ENCODE measurements at regions of chr2 and their contacts with region 1.

Region 1: DNA sequence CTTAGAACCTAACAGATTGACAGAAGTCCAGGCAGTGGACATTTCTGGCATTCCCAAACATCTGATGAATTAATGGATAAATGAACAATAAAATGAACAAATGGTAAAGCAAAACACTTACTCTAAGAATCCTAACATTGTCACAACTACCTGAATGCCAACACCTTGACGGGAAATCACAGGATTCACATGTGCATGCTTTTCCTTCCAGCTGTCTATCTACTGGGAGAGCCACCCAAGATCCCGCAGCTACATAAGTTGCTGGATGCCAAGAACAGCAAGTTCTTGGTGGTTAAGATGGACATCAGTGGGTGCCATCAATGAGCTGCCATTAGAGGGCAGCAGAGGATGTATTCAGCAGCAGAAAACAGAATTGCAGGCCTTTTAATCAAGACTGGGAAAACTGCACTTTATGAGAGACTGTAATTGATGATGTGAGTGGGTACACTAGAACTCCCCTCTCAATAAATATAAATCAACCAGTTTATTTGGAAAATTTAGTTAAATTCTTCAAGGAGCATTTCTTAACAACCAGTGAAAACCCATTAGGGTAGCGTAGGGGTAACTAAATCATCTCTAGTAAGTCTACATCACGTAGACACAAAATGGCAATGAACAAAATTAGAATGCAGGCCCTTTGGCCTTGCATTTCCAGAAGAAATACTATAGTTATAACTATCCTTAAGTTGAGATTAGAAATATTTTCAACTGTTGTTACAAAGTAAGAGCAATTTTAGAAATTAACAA is 45.6 kb downstream of the SESTD1 start:
- DNase-seq: peak; percentile 82
- ATAC-seq: peak; percentile 64
- H3K4me3 ChIP-seq: no peak overlapping the region
- H3K4me3 Mint-ChIP-seq: no peak overlapping the region
- H3K27ac ChIP-seq: no peak overlapping the region
- H3K27ac Mint-ChIP-seq: no peak overlapping the region
- H3K4me1 ChIP-seq: peaks cover 9 to 19% of the 10 kb centered on the region in 2 donors
- H3K4me1 Mint-ChIP-seq: peaks cover 52% of the 10 kb centered on the region
- H3K27me3 ChIP-seq: no peaks in the 10 kb centered on the region
- H3K27me3 Mint-ChIP-seq: no peaks in the 10 kb centered on the region
- CTCF ChIP-seq: peak; percentile 94

Region 2: DNA sequence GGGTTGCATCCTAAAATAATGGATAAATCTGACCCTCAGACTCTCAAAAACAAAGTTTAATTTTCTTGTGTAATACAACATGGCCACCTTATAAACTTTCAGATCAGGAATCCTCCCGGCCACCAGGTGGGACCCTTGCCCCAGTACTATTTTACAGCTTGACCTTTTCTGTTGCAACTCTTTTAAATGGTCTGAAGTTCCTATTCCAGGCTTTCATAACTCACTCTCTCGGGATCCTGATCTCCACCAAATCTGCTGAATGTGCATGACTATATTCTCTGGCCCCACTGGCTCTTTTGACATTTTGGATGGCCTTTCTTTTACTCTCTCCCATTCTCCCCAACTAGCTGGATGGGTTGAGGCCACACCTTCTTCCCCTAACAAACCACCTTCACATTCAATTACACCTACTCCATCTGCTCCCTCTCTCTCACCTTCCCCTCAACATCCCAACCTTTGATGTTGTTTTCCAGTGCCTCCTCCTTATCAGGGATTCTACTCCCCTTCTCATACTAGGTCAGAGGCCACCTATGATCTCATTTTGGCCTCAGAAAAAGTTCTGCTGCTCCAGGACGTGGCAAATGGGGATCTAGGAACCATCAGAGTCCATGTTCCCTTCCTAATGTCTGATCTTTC is 25.1 kb before region 1 on chr2:
- CTCF ChIA-PET with region 1: interaction called, 4 read pairs
- POLR2A ChIA-PET with region 1: no interaction called
- intact Hi-C with region 1: loop called (anchors 2 kb)
- DNase-seq: peak; percentile 4
- ATAC-seq: no peak
- H3K4me3 ChIP-seq: no peak overlapping the region
- H3K4me3 Mint-ChIP-seq: no peak overlapping the region
- H3K27ac ChIP-seq: no peak overlapping the region
- H3K27ac Mint-ChIP-seq: no peak overlapping the region
- H3K4me1 ChIP-seq: peaks cover 12 to 16% of the 10 kb centered on the region in 2 donors
- H3K4me1 Mint-ChIP-seq: peaks cover 56% of the 10 kb centered on the region
- H3K27me3 ChIP-seq: no peaks in the 10 kb centered on the region
- H3K27me3 Mint-ChIP-seq: no peaks in the 10 kb centered on the region
- CTCF ChIP-seq: no peak

Region 3: DNA sequence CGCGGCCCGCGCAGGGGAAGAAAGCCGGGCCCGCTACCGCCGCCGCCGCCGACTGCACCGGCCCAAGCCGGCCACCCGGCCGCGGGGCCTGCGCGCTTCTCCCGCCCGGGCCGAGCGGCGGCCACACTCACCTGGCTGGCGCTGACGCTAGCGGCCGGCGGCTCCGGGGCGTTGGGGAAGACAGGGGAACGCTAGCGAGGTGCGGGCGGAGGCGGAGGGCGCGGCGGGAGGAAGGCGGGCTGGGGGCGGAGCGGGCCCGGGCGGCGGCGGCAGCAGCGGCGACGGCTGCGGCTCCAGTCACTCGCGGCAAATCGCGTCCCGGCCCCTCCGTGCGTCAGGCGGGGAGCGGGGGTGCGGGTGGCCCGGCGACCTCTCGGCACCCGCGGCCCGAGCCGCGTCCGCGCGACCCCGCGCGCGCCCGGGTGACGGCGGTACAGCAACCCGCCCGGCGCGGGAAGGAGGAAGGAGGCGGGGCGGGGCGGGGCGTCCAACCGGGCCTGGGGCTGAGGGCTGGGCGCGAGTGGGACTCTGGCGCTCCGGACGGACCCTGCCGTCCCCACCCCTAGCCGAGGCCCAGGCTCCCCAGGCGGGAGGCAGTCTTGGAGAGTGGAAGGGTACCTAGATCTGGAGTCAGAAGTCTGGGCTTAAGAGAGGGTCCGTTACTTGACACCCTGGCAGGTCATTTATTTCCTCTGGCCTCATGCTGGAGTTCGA is 45.5 kb after region 1 on chr2 and contains the start of gene SESTD1:
- CTCF ChIA-PET with region 1: interaction called, 4 read pairs
- POLR2A ChIA-PET with region 1: no interaction called
- intact Hi-C with region 1: loop called (anchors 2 kb)
- DNase-seq: peak; percentile 83
- ATAC-seq: peak; percentile 79
- H3K4me3 ChIP-seq: peak within 1 kb of the TSS; percentile 62 to 96 (median 80)
- H3K4me3 Mint-ChIP-seq: peak within 1 kb of the TSS; percentile 92
- H3K27ac ChIP-seq: peak within 1 kb of the TSS; percentile 54 to 87
- H3K27ac Mint-ChIP-seq: peak within 1 kb of the TSS; percentile 91
- H3K4me1 ChIP-seq: peaks cover 24 to 45% of the 10 kb centered on the region in 2 donors
- H3K4me1 Mint-ChIP-seq: peaks cover 51% of the 10 kb centered on the region
- H3K27me3 ChIP-seq: no peaks in the 10 kb centered on the region
- H3K27me3 Mint-ChIP-seq: no peaks in the 10 kb centered on the region
- CTCF ChIP-seq: no peak
- total RNA-seq, gene SESTD1: 66.1 and 71.9 TPM in 2 replicates

Region 4: GRCh38 chr2:179340668-179341067 is 121.6 kb after region 1 on chr2:
- CTCF ChIA-PET with region 1: interaction called, 35 read pairs
- POLR2A ChIA-PET with region 1: no interaction called
- intact Hi-C with region 1: loop called (anchors 1 kb)
- DNase-seq: peak; percentile 52
- ATAC-seq: peak; percentile 51
- H3K4me3 ChIP-seq: no peak overlapping the region
- H3K4me3 Mint-ChIP-seq: no peak overlapping the region
- H3K27ac ChIP-seq: no peak overlapping the region
- H3K27ac Mint-ChIP-seq: no peak overlapping the region
- H3K4me1 ChIP-seq: peaks cover 2 to 8% of the 10 kb centered on the region in 2 donors
- H3K4me1 Mint-ChIP-seq: peaks cover 11% of the 10 kb centered on the region
- H3K27me3 ChIP-seq: no peaks in the 10 kb centered on the region
- H3K27me3 Mint-ChIP-seq: no peaks in the 10 kb centered on the region
- CTCF ChIP-seq: peak; percentile 38

Region 5: DNA sequence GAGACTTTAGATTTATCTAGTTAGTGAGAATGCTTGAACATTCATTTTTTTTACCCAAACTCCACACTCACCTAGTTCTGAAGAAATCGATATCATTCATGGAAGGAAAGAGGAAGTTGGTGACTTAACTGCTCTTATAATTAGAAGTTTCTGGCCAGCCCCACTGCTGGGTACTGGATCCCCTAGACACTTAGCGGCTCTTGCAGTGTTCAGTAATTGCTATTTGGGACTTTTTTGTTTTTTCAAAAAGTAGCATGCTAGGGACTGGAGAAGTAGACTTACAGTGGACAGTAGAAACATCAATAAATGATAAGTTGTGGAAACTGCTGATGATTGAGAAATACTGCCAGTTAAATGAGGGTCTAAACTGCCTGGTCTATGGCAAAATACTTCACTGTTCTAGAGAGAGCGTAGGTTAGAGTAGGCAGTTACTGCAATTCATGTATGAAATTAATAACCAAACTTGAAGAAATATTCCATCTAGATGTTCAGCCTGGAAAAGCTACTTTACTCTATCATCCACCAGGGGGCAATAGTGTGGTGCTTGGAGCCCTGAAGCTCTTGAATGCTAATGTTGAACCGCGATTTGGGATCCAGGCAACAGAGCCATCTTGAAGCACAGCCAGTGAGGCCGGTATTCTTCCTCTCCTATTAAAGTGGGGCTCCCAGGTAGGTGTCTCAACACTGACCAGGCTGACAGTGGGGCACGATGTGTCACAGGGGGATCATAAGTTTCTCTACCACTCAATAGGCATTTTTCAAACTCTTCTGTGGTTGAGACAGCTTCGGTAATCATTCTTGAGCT is 191.7 kb after region 1 on chr2:
- CTCF ChIA-PET with region 1: interaction called, 14 read pairs
- POLR2A ChIA-PET with region 1: no interaction called
- intact Hi-C with region 1: loop called (anchors 1 kb)
- DNase-seq: peak; percentile 47
- ATAC-seq: peak; percentile 45
- H3K4me3 ChIP-seq: no peak overlapping the region
- H3K4me3 Mint-ChIP-seq: no peak overlapping the region
- H3K27ac ChIP-seq: no peak overlapping the region
- H3K27ac Mint-ChIP-seq: no peak overlapping the region
- H3K4me1 ChIP-seq: peaks cover 7 to 8% of the 10 kb centered on the region in 2 donors
- H3K4me1 Mint-ChIP-seq: peaks cover 10% of the 10 kb centered on the region
- H3K27me3 ChIP-seq: peaks cover 0 to 13% (median 1%) of the 10 kb centered on the region in 4 experiments
- H3K27me3 Mint-ChIP-seq: peaks cover 35% of the 10 kb centered on the region
- CTCF ChIP-seq: peak; percentile 73

Region 6: GRCh38 chr2:179422037-179422643 is 203.1 kb after region 1 on chr2:
- CTCF ChIA-PET with region 1: no interaction called
- POLR2A ChIA-PET with region 1: no interaction called
- intact Hi-C with region 1: loop called (anchors 1 kb)
- DNase-seq: peak; percentile 58
- ATAC-seq: peak; percentile 61
- H3K4me3 ChIP-seq: no peak overlapping the region
- H3K4me3 Mint-ChIP-seq: no peak overlapping the region
- H3K27ac ChIP-seq: no peak overlapping the region
- H3K27ac Mint-ChIP-seq: no peak overlapping the region
- H3K4me1 ChIP-seq: no peaks in the 10 kb centered on the region
- H3K4me1 Mint-ChIP-seq: no peaks in the 10 kb centered on the region
- H3K27me3 ChIP-seq: no peaks in the 10 kb centered on the region
- H3K27me3 Mint-ChIP-seq: peaks cover 11% of the 10 kb centered on the region
- CTCF ChIP-seq: peak; percentile 77

Region 7: GRCh38 chr2:179440642-179441251 is 221.7 kb after region 1 on chr2:
- CTCF ChIA-PET with region 1: interaction called, 33 read pairs
- POLR2A ChIA-PET with region 1: no interaction called
- intact Hi-C with region 1: loop called (anchors 1 kb)
- DNase-seq: peak; percentile 70
- ATAC-seq: no peak
- H3K4me3 ChIP-seq: no peak overlapping the region
- H3K4me3 Mint-ChIP-seq: no peak overlapping the region
- H3K27ac ChIP-seq: no peak overlapping the region
- H3K27ac Mint-ChIP-seq: no peak overlapping the region
- H3K4me1 ChIP-seq: no peaks in the 10 kb centered on the region
- H3K4me1 Mint-ChIP-seq: no peaks in the 10 kb centered on the region
- H3K27me3 ChIP-seq: peaks cover 0 to 8% (median 1%) of the 10 kb centered on the region in 4 experiments
- H3K27me3 Mint-ChIP-seq: peaks cover 30% of the 10 kb centered on the region
- CTCF ChIP-seq: peak; percentile 89

Measured in B cell (primary cell).